PC-3 (cell line): ENCODE measurements at regions of chr10 and their contacts with region 1.

Region 1: DNA sequence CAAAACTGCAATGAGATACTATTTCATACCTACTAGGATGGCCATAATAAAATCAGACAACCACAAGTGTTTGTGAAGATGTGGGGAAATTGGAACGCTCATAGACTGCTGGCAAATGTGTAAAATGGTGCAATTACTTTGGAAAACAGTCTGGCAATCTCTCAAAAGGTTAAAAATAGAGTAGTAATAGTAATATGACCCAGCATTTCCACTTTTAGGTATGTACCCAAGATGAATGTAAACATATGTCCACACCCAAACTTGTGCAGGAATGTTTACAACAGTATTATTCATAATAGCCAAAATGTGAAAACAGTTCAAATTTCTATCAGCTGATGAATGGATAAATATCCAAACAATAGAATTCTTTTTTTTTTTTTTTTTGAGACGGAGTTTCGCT is 731.6 kb upstream of the ANKRD30A start:
- DNase-seq: peak; percentile 99
- ATAC-seq: peak; percentile 88
- H3K4me3 ChIP-seq: no peak overlapping the region
- H3K27ac ChIP-seq: peak overlapping the region; percentile 21
- H3K4me1 ChIP-seq: peaks cover 13% of the 10 kb centered on the region
- H3K27me3 ChIP-seq: no peaks in the 10 kb centered on the region
- CTCF ChIP-seq: no peak

Region 2: DNA sequence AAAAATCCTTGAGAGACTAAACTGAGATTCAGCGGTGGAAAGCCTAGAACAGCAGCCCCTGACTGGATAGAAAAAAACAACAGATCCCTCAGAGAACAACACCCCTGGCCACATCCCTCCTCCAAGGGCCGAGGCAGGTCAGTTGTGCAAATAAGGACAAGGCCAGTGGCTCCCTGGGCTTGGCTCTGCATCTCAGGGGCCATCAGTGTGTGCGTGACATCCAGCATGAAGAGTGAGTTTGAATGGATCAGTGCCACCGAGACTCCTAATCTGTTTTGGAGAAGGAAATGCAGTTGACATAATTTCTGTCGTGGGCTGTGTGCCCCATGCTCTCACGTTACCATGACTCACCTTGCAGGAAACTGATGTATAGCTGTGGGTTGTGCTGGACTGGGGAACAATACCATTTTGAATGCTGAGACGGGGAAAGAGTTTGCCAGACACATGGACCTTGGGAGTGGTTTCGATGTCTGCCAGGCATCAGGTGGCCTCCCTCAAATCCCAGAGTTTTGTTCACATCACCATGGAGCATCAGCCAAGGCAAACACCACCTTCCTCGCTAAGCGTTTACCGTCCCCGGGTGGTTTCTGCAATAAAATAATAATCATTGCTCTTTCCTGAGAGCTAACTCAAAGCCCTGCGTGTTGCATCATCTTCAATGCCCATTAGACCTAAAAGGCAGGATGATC is 598.5 kb before region 1 on chr10:
- CTCF ChIA-PET with region 1: no interaction called
- POLR2A ChIA-PET with region 1: no interaction called
- intact Hi-C with region 1: loop called (anchors 2 kb)
- DNase-seq: peak; percentile 100
- ATAC-seq: peak; percentile 94
- H3K4me3 ChIP-seq: peak overlapping the region; percentile 12
- H3K27ac ChIP-seq: peak overlapping the region; percentile 80
- H3K4me1 ChIP-seq: peaks cover 46% of the 10 kb centered on the region
- H3K27me3 ChIP-seq: no peaks in the 10 kb centered on the region
- CTCF ChIP-seq: no peak

Region 3: DNA sequence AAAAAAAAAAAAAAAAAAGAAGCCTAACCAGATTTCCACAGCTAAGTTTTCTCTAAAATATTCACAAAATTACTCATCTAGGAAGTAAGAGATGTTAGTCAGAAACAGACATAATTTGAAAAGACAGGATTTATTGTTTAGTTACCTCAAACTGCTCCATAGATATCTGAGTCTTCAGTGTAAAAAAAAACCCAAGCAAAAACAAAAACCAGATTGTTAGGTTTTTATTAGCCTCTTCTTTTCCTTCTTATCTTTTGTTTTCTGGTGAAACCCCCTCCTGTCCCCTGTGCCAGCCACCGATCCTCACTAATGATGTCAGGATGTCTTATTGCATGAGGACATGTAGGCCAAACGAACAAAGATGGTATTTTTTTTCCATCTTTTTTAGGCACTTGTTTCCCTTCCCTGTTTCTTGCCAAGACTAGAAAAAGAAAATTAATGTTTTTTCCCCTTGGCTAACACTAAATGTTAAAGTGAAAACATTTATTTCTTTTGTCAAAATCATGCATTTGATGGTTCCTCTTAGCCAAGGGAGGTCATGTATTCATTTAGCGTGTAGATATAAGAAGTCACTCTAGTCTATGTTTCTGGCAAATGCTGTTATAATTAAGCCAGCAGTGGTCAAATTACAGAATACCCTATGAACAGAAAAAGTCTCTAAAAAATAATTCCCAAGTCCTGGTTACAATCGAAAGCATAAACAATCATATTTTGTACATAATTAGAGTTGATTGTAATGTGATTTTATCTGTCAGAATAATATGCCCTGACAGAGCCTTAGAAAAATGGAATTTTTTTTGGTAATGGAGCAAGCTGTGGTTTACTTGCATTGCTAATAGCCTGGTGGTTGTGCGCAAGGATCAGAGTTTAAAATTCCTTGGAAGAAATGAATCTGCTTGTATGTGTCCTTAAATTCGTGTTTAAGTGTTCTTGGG is 49.3 kb before region 1 on chr10:
- CTCF ChIA-PET with region 1: interaction called, 4 read pairs
- POLR2A ChIA-PET with region 1: no interaction called
- intact Hi-C with region 1: loop called (anchors 2 kb)
- DNase-seq: peak; percentile 91
- ATAC-seq: peak; percentile 88
- H3K4me3 ChIP-seq: 0 out of 2 replicates have a peak overlapping the region, but pooled peaks have one; percentile 2
- H3K27ac ChIP-seq: peak overlapping the region; percentile 76
- H3K4me1 ChIP-seq: peaks cover 28% of the 10 kb centered on the region
- H3K27me3 ChIP-seq: no peaks in the 10 kb centered on the region
- CTCF ChIP-seq: no peak

Region 4: DNA sequence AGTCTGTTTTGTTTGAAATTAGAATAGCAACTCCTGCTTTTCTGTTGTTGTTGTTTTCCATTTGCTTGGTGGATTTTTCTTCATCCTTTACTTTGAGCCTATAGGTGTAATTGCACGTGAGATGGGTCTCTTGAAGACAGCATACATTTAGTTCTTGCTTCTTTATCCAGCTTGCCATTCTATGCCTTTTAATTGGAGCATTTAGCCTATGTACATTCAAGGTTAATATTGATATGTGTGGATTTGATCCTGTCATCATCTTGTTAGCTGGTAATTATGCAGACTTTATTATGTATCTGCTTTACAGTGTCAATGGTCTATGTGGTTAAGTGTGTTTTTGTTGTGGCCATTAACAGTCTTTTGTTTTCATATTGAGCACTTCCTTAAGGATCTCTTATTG is 22.7 kb after region 1 on chr10:
- CTCF ChIA-PET with region 1: interaction called, 5 read pairs
- POLR2A ChIA-PET with region 1: interaction called, 16 read pairs
- intact Hi-C with region 1: no loop called
- DNase-seq: no peak
- ATAC-seq: no peak
- H3K4me3 ChIP-seq: no peak overlapping the region
- H3K27ac ChIP-seq: no peak overlapping the region
- H3K4me1 ChIP-seq: peaks cover 15% of the 10 kb centered on the region
- H3K27me3 ChIP-seq: no peaks in the 10 kb centered on the region
- CTCF ChIP-seq: no peak

Region 5: DNA sequence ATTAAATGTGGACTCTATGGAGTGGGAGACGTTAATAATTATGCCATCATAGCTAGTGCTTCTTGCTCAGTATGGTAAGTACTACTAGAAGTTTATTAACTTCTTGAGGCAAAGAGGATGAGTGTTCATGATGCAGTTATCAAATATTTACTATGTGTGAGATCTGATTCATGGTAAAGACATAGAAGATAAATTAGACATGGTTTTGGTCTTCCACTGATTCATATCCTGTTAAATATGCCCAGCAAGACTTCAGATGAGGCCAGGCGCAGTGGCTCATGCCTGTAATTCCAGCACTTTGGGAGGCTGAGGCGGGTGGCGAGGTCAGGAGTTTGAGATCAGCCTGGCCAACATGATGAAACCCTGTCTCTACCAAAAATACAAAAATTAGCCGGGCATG is 184.5 kb after region 1 on chr10:
- CTCF ChIA-PET with region 1: no interaction called
- POLR2A ChIA-PET with region 1: no interaction called
- intact Hi-C with region 1: loop called (anchors 5 kb)
- DNase-seq: peak; percentile 100
- ATAC-seq: peak; percentile 96
- H3K4me3 ChIP-seq: no peak overlapping the region
- H3K27ac ChIP-seq: peak overlapping the region; percentile 84
- H3K4me1 ChIP-seq: peaks cover 19% of the 10 kb centered on the region
- H3K27me3 ChIP-seq: no peaks in the 10 kb centered on the region
- CTCF ChIP-seq: no peak

Region 6: GRCh38 chr10:36676756-36677430 is 283.1 kb after region 1 on chr10:
- CTCF ChIA-PET with region 1: no interaction called
- POLR2A ChIA-PET with region 1: no interaction called
- intact Hi-C with region 1: loop called (anchors 5 kb)
- DNase-seq: peak; percentile 90
- ATAC-seq: peak; percentile 72
- H3K4me3 ChIP-seq: no peak overlapping the region
- H3K27ac ChIP-seq: peak overlapping the region; percentile 47
- H3K4me1 ChIP-seq: peaks cover 47% of the 10 kb centered on the region
- H3K27me3 ChIP-seq: no peaks in the 10 kb centered on the region
- CTCF ChIP-seq: no peak